ENCODE measurements at regions of chr13 and their contacts with region 1.

Region 1: DNA sequence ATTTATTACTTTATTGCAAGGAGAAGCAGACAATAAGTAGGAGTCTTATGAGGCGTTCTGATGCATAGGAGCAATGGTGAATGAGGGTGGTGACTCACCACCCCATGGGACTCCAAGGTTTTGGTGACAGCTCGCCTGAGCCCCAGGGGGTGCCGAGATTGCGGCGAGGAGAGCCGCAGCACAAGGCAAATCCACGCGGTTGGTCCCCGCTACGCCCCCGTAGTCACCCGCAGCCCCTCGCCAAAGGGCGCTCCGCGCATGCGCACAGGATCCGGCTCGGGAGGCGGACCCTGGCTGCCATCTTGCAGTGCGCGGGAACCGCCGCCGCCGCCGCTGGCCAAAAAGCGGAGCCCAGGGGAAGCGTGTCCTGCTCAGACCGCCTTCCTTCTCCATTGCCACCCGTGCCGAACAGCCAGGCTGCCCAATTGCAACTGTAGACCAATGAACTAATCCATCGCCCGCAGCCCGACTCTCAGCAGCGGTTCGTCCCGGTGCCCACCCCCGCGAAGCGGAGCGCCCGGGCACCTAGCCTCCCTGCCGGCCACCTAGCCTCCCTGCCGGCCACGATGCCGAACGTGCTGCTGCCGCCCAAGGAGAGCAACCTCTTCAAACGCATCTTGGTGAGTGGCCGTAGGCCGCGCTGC is at the start of gene NAA16:
- DNase-seq: peak; percentile 94
- ATAC-seq: peak; percentile 85
- H3K4me3 ChIP-seq: peak within 1 kb of the TSS; percentile 93 to 100 (median 99)
- H3K4me3 Mint-ChIP-seq: peak within 1 kb of the TSS; percentile 95
- H3K27ac ChIP-seq: peak within 1 kb of the TSS; percentile 80 to 83
- H3K27ac Mint-ChIP-seq: peak within 1 kb of the TSS; percentile 96
- H3K4me1 ChIP-seq: peaks cover 26 to 27% of the 10 kb centered on the region in 2 donors
- H3K4me1 Mint-ChIP-seq: peaks cover 39% of the 10 kb centered on the region
- H3K27me3 ChIP-seq: no peaks in the 10 kb centered on the region
- H3K27me3 Mint-ChIP-seq: no peaks in the 10 kb centered on the region
- CTCF ChIP-seq: no peak
- total RNA-seq, gene NAA16: 32.5 and 33.5 TPM in 2 replicates

Region 2: DNA sequence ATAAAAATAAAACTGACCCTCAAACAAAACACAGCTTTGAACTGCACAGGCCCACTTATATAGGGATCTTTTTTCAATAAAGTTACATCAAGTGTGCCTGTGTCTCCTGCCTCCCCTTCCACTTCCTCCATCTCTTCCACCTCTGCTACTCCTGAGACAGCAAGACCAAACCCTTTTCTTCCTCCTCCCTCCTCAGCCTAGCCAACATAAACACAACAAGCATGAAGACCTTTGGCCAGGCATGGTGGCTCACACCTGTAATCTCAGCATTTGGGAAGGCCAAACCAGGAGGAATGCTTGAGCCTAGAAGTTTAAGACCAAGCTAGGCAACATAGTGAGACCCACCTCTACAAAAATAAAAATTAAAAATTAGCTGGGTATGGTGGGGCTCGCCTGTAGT is 364.6 kb before region 1 on chr13:
- CTCF ChIA-PET with region 1: no interaction called
- POLR2A ChIA-PET with region 1: no interaction called
- intact Hi-C with region 1: no loop called
- DNase-seq: no peak
- ATAC-seq: no peak
- H3K4me3 ChIP-seq: no peak overlapping the region
- H3K4me3 Mint-ChIP-seq: no peak overlapping the region
- H3K27ac ChIP-seq: peak overlapping the region in 1 of 2 donors; percentile 45
- H3K27ac Mint-ChIP-seq: peak overlapping the region; percentile 51
- H3K4me1 ChIP-seq: no peaks in the 10 kb centered on the region
- H3K4me1 Mint-ChIP-seq: peaks cover 6% of the 10 kb centered on the region
- H3K27me3 ChIP-seq: no peaks in the 10 kb centered on the region
- H3K27me3 Mint-ChIP-seq: no peaks in the 10 kb centered on the region
- CTCF ChIP-seq: no peak

Region 3: GRCh38 chr13:41193919-41194824 is 116.9 kb before region 1 on chr13 and contains the start of gene KBTBD7:
- CTCF ChIA-PET with region 1: no interaction called
- POLR2A ChIA-PET with region 1: no interaction called
- intact Hi-C with region 1: loop called (anchors 2 kb)
- DNase-seq: peak; percentile 90
- ATAC-seq: peak; percentile 94
- H3K4me3 ChIP-seq: peak within 1 kb of the TSS; percentile 59 to 92 (median 88)
- H3K4me3 Mint-ChIP-seq: peak within 1 kb of the TSS; percentile 96
- H3K27ac ChIP-seq: peak within 1 kb of the TSS; percentile 32 to 63
- H3K27ac Mint-ChIP-seq: peak within 1 kb of the TSS; percentile 94
- H3K4me1 ChIP-seq: peaks cover 33 to 34% of the 10 kb centered on the region in 2 donors
- H3K4me1 Mint-ChIP-seq: peaks cover 45% of the 10 kb centered on the region
- H3K27me3 ChIP-seq: no peaks in the 10 kb centered on the region
- H3K27me3 Mint-ChIP-seq: no peaks in the 10 kb centered on the region
- CTCF ChIP-seq: no peak
- total RNA-seq, gene KBTBD7: 8.4 and 9.2 TPM in 2 replicates

Region 4: GRCh38 chr13:42048682-42049453 is 737.8 kb after region 1 on chr13:
- CTCF ChIA-PET with region 1: no interaction called
- POLR2A ChIA-PET with region 1: no interaction called
- intact Hi-C with region 1: loop called (anchors 5 kb)
- DNase-seq: peak; percentile 61
- ATAC-seq: peak; percentile 71
- H3K4me3 ChIP-seq: peak overlapping the region; percentile 59 to 79 (median 64)
- H3K4me3 Mint-ChIP-seq: peak overlapping the region; percentile 88
- H3K27ac ChIP-seq: no peak overlapping the region
- H3K27ac Mint-ChIP-seq: peak overlapping the region; percentile 37
- H3K4me1 ChIP-seq: peaks cover 17 to 19% of the 10 kb centered on the region in 2 donors
- H3K4me1 Mint-ChIP-seq: peaks cover 10% of the 10 kb centered on the region
- H3K27me3 ChIP-seq: peaks cover 0 to 35% (median 28%) of the 10 kb centered on the region in 4 experiments
- H3K27me3 Mint-ChIP-seq: peaks cover 39% of the 10 kb centered on the region
- CTCF ChIP-seq: no peak